Pancreas (tissue), 10 donors: ENCODE measurements at regions of chr7 and their contacts with region 1.

Region 1: GRCh38 chr7:35544028-35544742 is 150.8 kb downstream of the HERPUD2 start:
- DNase-seq: no peak
- ATAC-seq: no peak
- H3K4me3 ChIP-seq: no peak overlapping the region
- H3K27ac ChIP-seq: no peak overlapping the region
- H3K4me1 ChIP-seq: no peaks in the 10 kb centered on the region
- H3K27me3 ChIP-seq: no peaks in the 10 kb centered on the region
- CTCF ChIP-seq: no peak

Region 2: DNA sequence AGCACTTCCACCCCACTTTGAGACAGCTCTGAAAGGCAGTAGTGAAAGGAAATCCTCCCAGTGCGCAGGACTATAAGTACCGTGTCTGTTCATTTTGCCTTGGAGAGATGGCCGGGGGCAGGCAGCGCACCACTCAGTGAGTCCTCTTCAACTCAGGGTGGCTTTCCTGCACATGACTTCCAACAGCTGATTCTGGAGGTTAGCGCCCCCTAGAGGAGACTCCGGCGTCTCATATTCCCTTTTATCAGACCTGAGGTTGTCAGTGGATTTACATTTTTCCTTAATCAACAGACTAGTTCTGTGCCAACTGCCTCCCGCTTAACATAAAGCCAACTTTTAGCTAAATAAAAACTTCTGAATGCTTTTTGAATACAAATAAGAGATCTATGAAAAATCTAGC is 49.7 kb after region 1 on chr7:
- intact Hi-C with region 1: loop called in 1 of 3 experiments (anchors 10 kb)
- DNase-seq: no peak
- ATAC-seq: no peak
- H3K4me3 ChIP-seq: no peak overlapping the region
- H3K27ac ChIP-seq: no peak overlapping the region
- H3K4me1 ChIP-seq: no peaks in the 10 kb centered on the region
- H3K27me3 ChIP-seq: no peaks in the 10 kb centered on the region
- CTCF ChIP-seq: peak in 1 of 4 donors; percentile 15